Psoas muscle (tissue), 8 donors: ENCODE measurements at regions of chr7 and their contacts with region 1.

Region 1: DNA sequence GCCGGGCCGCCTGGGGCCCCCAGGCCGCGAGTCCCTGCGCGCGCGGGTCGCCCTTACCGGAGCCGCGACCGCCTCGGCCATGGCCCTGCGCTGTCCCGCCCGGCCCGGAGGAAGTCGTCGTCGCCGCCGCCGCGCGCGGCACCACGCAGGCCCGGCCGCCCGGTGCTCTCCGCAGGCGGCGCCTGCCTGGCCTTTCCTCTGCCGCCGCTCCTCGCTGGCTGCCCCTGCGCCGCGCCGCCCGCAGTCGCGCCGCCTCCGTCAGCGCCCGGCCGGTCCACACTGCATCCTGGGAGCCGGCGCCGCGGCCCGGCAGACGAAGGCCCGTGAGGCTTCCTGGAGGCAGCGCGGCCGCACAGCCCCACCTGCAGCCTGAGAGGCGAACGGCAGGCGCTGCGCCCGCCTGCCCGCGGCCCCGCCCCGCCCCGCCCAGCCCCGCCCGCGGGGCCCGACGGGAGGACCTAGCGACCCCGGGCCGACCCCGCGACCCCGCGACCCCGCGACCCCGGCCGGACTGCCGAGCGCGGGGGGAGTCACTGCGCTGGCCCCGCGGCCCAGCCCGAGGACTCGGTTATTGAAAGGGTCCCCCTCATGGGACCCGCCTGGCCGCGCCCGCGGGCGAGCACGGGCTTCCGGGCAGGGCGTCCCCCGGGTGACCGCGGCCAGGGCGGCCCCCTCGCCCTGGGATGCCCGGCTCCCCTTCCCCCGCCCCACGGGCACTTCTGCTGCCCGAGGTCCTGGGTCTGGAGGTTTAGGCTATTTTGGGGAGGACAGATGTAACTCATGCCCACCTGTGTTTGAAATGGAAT is at the start of gene ZNF746:
- DNase-seq: peak; percentile 86 to 91
- ATAC-seq: peak; percentile 94 to 97 (median 95)
- H3K4me3 ChIP-seq: peak within 1 kb of the TSS; percentile 85
- H3K27ac ChIP-seq: peak within 1 kb of the TSS; percentile 79
- H3K4me1 ChIP-seq: peaks cover 18% of the 10 kb centered on the region
- H3K27me3 ChIP-seq: no peaks in the 10 kb centered on the region
- CTCF ChIP-seq: peak; percentile 79
- total RNA-seq, gene ZNF746: 8.5 to 12.7 (median 9.3) TPM

Region 2: DNA sequence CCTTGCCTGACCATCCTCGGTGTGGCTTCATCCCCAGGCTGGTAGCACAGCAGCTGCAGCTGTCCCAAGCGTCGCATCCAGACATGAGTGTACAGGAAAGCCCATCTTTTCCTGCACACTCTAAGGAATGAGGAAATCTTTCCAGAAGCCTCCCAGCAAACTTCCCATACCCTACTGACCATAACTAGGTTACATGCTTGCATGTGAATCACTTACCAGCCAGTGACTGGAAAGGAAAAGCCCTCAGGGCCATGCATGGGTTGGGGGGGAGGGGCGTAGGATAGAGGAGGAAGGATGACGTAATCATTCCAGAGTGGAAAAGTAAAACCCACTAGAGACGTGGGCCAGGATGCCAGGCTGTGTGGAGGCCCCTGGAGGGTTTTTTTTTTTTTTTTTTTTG is 277.1 kb before region 1 on chr7:
- intact Hi-C with region 1: no loop called
- DNase-seq: no peak
- ATAC-seq: peak in 1 of 4 donors; percentile 35
- H3K4me3 ChIP-seq: no peak overlapping the region
- H3K27ac ChIP-seq: no peak overlapping the region
- H3K4me1 ChIP-seq: no peaks in the 10 kb centered on the region
- H3K27me3 ChIP-seq: no peaks in the 10 kb centered on the region
- CTCF ChIP-seq: no peak

Region 3: GRCh38 chr7:149261829-149262617 is 235.6 kb before region 1 on chr7 and contains the start of gene ZNF783:
- intact Hi-C with region 1: loop called in 1 of 2 experiments (anchors 10 kb)
- DNase-seq: peak; percentile 91 to 94
- ATAC-seq: peak; percentile 90 to 96 (median 94)
- H3K4me3 ChIP-seq: peak within 1 kb of the TSS; percentile 82
- H3K27ac ChIP-seq: peak within 1 kb of the TSS; percentile 93
- H3K4me1 ChIP-seq: peaks cover 5% of the 10 kb centered on the region
- H3K27me3 ChIP-seq: no peaks in the 10 kb centered on the region
- CTCF ChIP-seq: peak; percentile 87
- total RNA-seq, gene ZNF783: 6.0 to 9.0 (median 7.2) TPM

Region 4: DNA sequence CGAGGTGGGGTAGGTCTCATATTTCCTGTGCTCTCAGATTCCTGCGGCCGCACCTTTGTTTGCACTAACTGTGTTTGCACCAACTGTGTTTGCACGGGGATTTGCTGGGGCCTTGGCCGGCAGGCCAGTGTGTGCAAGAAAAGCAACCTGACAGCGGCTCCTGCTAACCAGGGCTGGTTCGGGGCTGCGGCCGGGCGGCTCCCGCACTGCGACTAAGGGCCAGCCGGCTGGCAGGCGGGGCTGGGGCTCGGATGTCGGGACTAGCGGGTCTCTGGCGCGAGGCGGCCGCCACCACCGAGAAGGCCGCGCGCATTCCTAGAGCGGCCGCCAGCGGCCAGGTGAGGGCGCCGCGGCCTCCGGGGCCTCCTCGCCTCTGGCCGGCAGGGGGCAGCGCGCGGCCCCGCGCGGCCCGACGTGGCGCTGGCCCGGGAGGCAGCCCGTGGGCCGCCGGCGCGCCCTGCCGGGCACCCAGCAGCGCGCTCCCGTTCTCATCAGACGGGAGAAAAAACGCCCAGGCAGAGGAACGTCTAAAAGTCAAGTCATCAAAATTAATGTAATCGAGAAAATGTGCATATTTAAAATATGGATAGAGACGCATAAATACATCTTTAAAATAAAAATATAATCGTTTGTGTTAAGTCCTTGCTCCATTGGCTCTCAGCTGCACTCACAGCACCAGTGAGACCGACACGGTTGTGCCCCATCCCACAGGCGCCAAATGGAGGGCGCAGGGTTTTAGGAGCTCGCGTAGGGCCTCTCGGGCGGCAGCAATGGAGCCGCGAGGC is 75.3 kb before region 1 on chr7:
- intact Hi-C with region 1: loop called in 1 of 2 experiments (anchors 2 kb)
- DNase-seq: peak; percentile 64 to 67
- ATAC-seq: peak; percentile 90 to 96 (median 94)
- H3K4me3 ChIP-seq: peak overlapping the region; percentile 68
- H3K27ac ChIP-seq: no peak overlapping the region
- H3K4me1 ChIP-seq: peaks cover 4% of the 10 kb centered on the region
- H3K27me3 ChIP-seq: no peaks in the 10 kb centered on the region
- CTCF ChIP-seq: peak; percentile 67

Region 5: GRCh38 chr7:149460493-149461277 is 37.0 kb before region 1 on chr7 and contains the start of gene ZNF777:
- intact Hi-C with region 1: loop called in 1 of 2 experiments (anchors 5 kb)
- DNase-seq: peak; percentile 83 to 91
- ATAC-seq: peak; percentile 94 to 99 (median 98)
- H3K4me3 ChIP-seq: peak within 1 kb of the TSS; percentile 79
- H3K27ac ChIP-seq: peak within 1 kb of the TSS; percentile 68
- H3K4me1 ChIP-seq: peaks cover 14% of the 10 kb centered on the region
- H3K27me3 ChIP-seq: no peaks in the 10 kb centered on the region
- CTCF ChIP-seq: peak; percentile 50
- total RNA-seq, gene ZNF777: 10.6 to 18.6 (median 12.2) TPM

Region 6: DNA sequence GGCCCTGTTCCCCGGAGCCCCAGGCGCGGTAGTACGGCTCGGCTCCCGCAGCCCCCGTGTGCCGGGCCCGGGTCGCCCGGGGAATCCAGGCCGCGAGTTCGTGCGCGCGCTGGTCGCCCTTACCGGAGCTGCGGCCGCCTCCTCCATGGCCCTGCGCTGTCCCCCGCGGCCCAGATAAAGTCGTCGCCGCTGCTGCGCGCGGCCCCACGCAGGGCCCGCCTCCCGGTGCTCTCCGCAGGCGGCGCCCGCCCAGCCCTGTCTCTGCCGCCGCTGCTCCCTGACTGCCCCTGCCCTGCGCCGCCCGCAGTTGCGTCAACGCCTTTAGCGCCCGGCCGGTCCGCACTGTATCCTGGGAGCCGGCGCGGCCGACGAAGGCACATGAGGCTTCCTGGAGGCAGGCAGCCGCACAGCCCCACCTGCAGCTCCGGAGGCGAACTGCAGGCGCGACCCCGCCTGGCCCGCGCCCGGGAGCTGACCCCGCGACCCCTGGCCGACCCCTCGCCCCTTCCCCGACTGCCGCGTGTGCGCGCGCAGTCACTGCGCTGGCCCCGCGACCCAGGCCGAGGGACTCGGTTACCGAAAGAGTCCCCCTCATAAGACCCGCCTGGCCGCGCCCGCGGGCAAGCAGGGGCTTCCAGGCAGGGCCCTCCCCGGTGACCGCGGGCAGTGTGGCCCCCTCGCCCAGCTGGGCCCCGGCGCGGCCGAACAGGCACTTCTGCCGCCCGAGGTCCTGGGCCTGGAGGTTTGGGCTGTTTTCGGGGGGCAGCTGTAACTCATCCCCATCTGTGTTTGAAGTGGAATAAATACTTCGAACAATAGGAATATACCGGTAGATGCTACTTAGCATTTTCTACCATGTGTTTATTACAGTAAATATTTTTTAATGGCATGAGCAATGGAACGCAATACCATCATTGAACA is 127.0 kb after region 1 on chr7:
- intact Hi-C with region 1: loop called in 1 of 2 experiments (anchors 5 kb)
- DNase-seq: peak; percentile 96 to 97
- ATAC-seq: peak; percentile 96 to 99 (median 98)
- H3K4me3 ChIP-seq: peak overlapping the region; percentile 95
- H3K27ac ChIP-seq: peak overlapping the region; percentile 86
- H3K4me1 ChIP-seq: peaks cover 24% of the 10 kb centered on the region
- H3K27me3 ChIP-seq: no peaks in the 10 kb centered on the region
- CTCF ChIP-seq: peak; percentile 100

Region 7: DNA sequence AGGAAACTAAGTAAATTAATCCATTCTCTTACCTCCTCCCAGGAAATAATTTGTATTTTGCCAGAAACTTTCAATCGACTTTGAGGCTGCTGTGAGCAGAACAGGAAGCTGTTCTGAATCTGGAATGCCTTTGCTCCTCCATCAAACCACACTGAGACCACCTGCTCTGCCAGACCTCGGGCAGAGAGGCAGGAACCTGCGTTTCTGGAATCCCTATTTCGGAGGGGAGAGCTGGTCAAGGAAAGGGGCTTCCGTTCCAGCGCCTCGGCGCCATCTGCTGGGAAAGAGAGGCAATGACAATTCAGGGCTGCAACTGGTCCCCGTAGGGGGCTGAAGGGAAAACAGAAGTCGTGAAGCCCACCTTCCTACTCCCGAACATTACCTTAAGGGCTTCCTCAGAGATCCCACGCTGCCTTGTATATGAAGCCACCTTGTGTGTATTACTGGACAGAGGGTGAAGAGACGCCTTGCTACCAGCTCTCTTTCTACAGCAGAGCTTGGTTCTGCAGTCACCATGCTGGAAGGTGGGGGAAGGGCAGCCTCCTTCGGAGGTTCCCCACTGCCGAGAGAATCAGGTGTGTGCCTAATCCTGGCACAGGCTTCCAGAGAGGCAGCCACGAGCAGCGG is 244.5 kb after region 1 on chr7:
- intact Hi-C with region 1: loop called in 1 of 2 experiments (anchors 10 kb)
- DNase-seq: peak; percentile 65 to 80
- ATAC-seq: peak; percentile 84 to 97 (median 88)
- H3K4me3 ChIP-seq: peak overlapping the region; percentile 67
- H3K27ac ChIP-seq: peak overlapping the region; percentile 61
- H3K4me1 ChIP-seq: peaks cover 12% of the 10 kb centered on the region
- H3K27me3 ChIP-seq: no peaks in the 10 kb centered on the region
- CTCF ChIP-seq: peak; percentile 94